ENCODE measurements at regions of chr18 and their contacts with region 1.

Region 1: DNA sequence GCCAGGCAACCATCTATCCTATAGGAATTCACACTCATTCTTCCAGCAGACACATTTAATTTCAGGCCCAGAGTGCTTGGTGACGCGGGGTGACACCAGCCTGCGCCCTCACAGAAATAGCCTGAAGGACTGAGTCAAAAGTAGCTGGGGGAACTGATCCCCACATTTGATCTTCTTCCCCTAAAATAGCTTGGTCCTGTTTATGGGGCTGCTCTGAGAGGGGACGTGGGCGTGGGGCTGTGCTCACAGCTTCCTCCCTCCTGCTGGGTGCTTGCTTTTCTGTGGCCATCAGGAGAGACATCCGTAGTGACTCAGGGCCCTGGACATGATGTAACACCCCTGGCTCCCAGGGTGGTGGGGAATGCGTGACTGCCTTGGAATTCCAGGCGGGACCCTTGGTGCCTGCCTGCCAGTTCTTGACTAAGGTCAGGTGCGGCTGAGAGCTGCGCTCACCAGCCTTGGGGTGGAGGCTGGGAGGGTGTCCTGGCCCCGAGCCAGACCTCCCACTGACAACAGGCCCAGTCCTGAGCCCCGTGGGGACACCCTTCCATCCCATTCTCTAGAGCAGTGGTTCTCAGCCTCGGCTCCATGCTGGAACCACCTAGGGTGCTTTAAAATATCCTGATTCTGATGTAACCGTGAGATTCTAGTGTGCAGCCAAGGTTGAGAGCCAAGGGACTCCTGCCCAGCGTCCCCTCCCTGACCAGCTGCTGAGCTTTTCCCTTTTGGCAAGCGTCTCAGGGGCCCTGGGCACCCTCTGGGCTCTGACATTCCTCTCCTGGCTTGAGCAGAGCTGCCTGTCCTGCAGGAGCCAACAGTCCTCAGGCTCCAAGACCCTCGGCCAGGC is 47.4 kb upstream of the SMAD7 start:
- DNase-seq: peak; percentile 91
- ATAC-seq: peak; percentile 81
- H3K4me3 ChIP-seq: peak overlapping the region; percentile 6 to 46
- H3K27ac ChIP-seq: peak overlapping the region; percentile 57
- H3K4me1 ChIP-seq: peaks cover 31 to 55% of the 10 kb centered on the region in 2 experiments
- H3K27me3 ChIP-seq: no peaks in the 10 kb centered on the region; the same call in 1 of the 2 replicates
- CTCF ChIP-seq: no peak
- POLR2A ChIP-seq: no peak
- RAD21 ChIP-seq: no peak

Region 2: GRCh38 chr18:48940854-48941611 is 57.2 kb before region 1 on chr18:
- CTCF ChIA-PET with region 1: interaction called, 3 read pairs
- POLR2A ChIA-PET with region 1: no interaction called
- RAD21 ChIA-PET with region 1: interaction called in 1 of 2 experiments, 3 read pairs
- intact Hi-C with region 1: loop called (anchors 5 kb)
- DNase-seq: no peak
- ATAC-seq: no peak
- H3K4me3 ChIP-seq: no peak overlapping the region
- H3K27ac ChIP-seq: no peak overlapping the region
- H3K4me1 ChIP-seq: peaks cover 84 to 97% of the 10 kb centered on the region in 2 experiments
- H3K27me3 ChIP-seq: peaks cover 25% of the 10 kb centered on the region; the same call in 1 of the 2 replicates
- CTCF ChIP-seq: no peak
- POLR2A ChIP-seq: no peak
- RAD21 ChIP-seq: no peak

Region 3: GRCh38 chr18:49381267-49381850 is 383.2 kb after region 1 on chr18:
- CTCF ChIA-PET with region 1: no interaction called
- POLR2A ChIA-PET with region 1: no interaction called
- RAD21 ChIA-PET with region 1: no interaction called
- intact Hi-C with region 1: no loop called
- DNase-seq: no peak
- ATAC-seq: no peak
- H3K4me3 ChIP-seq: no peak overlapping the region
- H3K27ac ChIP-seq: no peak overlapping the region
- H3K4me1 ChIP-seq: peaks cover 0 to 8% of the 10 kb centered on the region in 2 experiments; a peak in 2 of 4 replicates
- H3K27me3 ChIP-seq: no peaks in the 10 kb centered on the region
- CTCF ChIP-seq: no peak
- POLR2A ChIP-seq: no peak
- RAD21 ChIP-seq: no peak